Naive thymus-derived CD4-positive, alpha-beta T cell (primary cell): ENCODE measurements at regions of chr14 and their contacts with region 1.

Region 1: GRCh38 chr14:76876076-76876475 is 49.9 kb downstream of the LRRC74A start:
- DNase-seq: peak in 7 of 9 donors; percentile 23 to 50 (median 37)
- ATAC-seq: peak; percentile 73
- H3K4me3 ChIP-seq: no peak overlapping the region
- H3K4me3 Mint-ChIP-seq: no peak overlapping the region
- H3K27ac ChIP-seq: no peak overlapping the region
- H3K27ac Mint-ChIP-seq: peak overlapping the region in 1 of 9 donors; percentile 69
- H3K4me1 ChIP-seq: no peaks in the 10 kb centered on the region
- H3K4me1 Mint-ChIP-seq: peaks cover 0 to 3% (median 0%) of the 10 kb centered on the region in 7 donors
- H3K27me3 ChIP-seq: no peaks in the 10 kb centered on the region
- H3K27me3 Mint-ChIP-seq: no peaks in the 10 kb centered on the region

Region 2: DNA sequence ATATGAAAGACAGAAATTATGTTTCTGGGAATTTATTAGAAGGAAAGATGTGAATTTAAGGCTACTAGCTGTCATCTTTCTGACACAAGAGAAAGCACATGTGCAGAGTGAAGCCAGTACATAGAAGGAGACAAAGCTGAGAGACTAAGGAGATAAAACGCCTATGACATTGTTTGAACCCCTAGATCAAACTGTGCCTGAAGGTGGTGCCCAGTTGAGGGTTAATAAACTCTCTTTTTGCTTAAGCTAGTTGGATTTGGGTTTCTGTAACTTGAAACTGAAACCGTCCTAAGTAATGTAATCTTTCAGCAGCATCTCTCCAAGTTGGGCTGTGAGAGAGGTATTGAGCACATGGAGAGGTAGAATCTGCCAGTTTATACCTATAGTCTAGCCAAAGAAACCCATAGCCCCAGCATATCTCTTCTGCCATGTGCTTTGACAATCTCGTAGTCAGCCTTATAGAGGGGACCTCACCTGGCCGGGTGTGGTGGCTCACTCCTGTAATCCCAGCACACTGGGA is 34.4 kb after region 1 on chr14:
- CTCF ChIA-PET with region 1: interaction called, 34 read pairs
- POLR2A ChIA-PET with region 1: no interaction called
- intact Hi-C with region 1: loop called (anchors 1 to 2 kb)
- DNase-seq: no peak
- ATAC-seq: no peak
- H3K4me3 ChIP-seq: no peak overlapping the region
- H3K4me3 Mint-ChIP-seq: no peak overlapping the region
- H3K27ac ChIP-seq: no peak overlapping the region
- H3K27ac Mint-ChIP-seq: peak overlapping the region in 2 of 9 donors; percentile 32 to 58
- H3K4me1 ChIP-seq: peaks cover 7 to 22% of the 10 kb centered on the region in 2 donors
- H3K4me1 Mint-ChIP-seq: peaks cover 7 to 52% (median 20%) of the 10 kb centered on the region in 7 donors
- H3K27me3 ChIP-seq: no peaks in the 10 kb centered on the region
- H3K27me3 Mint-ChIP-seq: no peaks in the 10 kb centered on the region

Region 3: DNA sequence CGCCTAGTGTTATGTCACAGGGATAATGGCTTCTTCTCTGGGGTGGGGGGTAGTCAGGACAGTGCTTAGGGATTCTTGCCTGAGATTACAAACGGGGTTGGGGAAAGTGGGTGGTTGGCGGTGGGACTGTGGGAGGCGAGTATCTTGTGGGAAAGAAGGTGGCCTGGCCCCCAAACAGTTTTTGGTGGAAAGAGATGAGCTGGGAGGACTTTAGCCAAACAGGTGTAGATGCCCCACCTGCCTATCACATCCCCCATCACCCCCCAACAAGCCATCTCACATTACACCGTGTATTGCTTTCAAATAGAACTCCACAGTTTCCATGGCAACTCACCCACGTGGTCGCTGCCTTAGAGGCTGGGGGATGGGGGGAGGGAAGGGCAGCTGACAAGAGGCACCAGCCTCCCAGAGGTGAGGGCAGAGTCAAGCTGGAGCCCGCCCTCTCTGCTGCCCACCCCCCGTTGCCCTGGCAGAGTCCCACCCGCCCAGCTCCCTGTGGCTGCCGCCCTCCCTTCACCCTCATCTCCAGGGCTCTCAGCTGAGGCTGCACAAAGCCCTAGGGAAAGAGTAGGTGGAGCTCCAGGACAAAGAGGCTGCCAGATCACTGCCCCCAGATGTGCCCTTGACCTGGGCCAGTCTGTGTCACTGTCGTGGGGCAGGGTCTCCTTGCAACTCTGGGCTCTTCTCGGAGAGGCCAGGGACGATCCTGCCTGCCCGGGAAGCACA is 48.5 kb after region 1 on chr14:
- CTCF ChIA-PET with region 1: no interaction called
- POLR2A ChIA-PET with region 1: no interaction called
- intact Hi-C with region 1: no loop called
- DNase-seq: peak in 5 of 9 donors; percentile 32 to 72 (median 41)
- ATAC-seq: peak; percentile 55
- H3K4me3 ChIP-seq: no peak overlapping the region
- H3K4me3 Mint-ChIP-seq: peak overlapping the region in 1 of 10 donors; percentile 84
- H3K27ac ChIP-seq: no peak overlapping the region
- H3K27ac Mint-ChIP-seq: peak overlapping the region in 8 of 9 donors; percentile 7 to 84 (median 54)
- H3K4me1 ChIP-seq: peaks cover 36 to 63% of the 10 kb centered on the region in 2 donors
- H3K4me1 Mint-ChIP-seq: peaks cover 35 to 95% (median 87%) of the 10 kb centered on the region in 7 donors
- H3K27me3 ChIP-seq: no peaks in the 10 kb centered on the region
- H3K27me3 Mint-ChIP-seq: no peaks in the 10 kb centered on the region

Region 4: DNA sequence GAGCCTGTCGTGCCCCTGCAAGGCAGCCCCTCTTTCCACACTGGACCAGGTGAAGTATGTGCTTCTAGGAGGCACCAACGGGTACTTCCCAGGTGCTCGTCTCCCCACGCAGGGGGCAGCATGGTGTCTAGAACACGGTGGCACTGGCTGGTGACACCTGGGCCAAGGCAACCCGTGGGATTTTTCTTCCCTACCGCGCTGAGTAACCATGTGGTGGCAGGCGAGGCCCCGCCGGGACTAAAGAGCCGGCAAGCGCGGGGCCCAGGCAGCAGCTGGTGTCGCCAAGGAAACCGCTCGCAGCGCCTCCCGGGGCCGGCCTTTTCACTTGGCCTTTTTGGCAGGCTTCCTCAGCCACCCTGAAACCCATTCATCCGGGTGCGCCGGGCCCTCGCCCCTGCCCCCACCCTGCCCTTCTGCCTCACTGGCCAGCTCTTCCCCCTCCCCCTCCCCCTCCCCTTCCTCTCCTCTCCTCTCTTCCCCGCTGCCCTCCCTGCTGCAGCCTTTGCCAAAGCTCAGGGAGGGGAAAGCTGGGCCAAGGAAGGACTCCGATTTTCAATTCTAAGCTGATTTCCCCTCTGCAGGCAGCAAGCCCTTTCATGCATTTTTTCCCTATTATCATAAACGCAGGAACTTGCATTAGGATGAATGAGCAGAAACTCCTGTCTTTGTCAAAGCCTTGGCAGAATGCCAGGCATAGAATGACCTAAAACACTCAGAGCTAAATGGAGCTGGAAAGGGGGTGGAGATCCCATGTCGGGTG is 71.2 kb after region 1 on chr14:
- CTCF ChIA-PET with region 1: interaction called, 3 read pairs
- POLR2A ChIA-PET with region 1: no interaction called
- intact Hi-C with region 1: loop called (anchors 1 to 2 kb)
- DNase-seq: peak; percentile 53 to 76 (median 68)
- ATAC-seq: peak; percentile 96
- H3K4me3 ChIP-seq: no peak overlapping the region
- H3K4me3 Mint-ChIP-seq: peak overlapping the region in 9 of 10 donors; percentile 20 to 65 (median 50)
- H3K27ac ChIP-seq: peak overlapping the region; percentile 20
- H3K27ac Mint-ChIP-seq: peak overlapping the region in 7 of 9 donors; percentile 28 to 83 (median 63)
- H3K4me1 ChIP-seq: peaks cover 6 to 16% of the 10 kb centered on the region in 2 donors
- H3K4me1 Mint-ChIP-seq: peaks cover 20 to 56% (median 35%) of the 10 kb centered on the region in 7 donors
- H3K27me3 ChIP-seq: no peaks in the 10 kb centered on the region
- H3K27me3 Mint-ChIP-seq: no peaks in the 10 kb centered on the region

Region 5: DNA sequence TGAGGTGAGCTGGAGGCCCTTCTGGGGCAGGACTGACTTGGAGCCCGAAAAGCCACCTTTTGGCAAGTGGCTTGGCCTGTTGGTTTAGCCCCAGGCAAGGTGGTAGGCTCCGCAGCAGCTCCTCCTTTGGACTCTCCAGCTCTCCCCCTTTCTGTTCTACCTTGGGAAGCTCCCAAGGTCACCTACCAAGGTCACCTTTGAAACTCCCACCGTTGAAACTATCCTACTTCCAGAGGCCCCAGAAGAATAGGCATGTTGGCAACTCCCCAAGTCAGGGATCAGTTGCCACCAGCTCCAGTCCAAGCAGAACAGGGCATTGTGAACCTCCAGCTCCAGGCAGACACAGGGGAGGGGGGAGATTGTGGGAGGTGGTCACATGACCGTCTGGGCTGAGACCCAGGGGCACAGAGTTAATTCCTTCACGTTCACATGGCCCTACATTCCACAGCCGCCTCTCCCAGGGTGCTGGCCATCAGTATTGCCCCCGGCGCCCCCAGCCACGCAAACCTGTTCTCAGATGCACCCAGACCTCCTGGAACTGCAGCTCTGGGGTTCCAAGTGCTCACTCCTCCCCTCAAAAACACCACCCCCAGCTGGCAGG is 138.0 kb after region 1 on chr14:
- CTCF ChIA-PET with region 1: no interaction called
- POLR2A ChIA-PET with region 1: no interaction called
- intact Hi-C with region 1: no loop called
- DNase-seq: no peak
- ATAC-seq: no peak
- H3K4me3 ChIP-seq: no peak overlapping the region
- H3K4me3 Mint-ChIP-seq: no peak overlapping the region
- H3K27ac ChIP-seq: no peak overlapping the region
- H3K27ac Mint-ChIP-seq: no peak overlapping the region
- H3K4me1 ChIP-seq: peaks cover 0 to 17% of the 10 kb centered on the region in 2 donors
- H3K4me1 Mint-ChIP-seq: peaks cover 12 to 26% (median 20%) of the 10 kb centered on the region in 7 donors
- H3K27me3 ChIP-seq: no peaks in the 10 kb centered on the region
- H3K27me3 Mint-ChIP-seq: peaks cover 0 to 3% (median 0%) of the 10 kb centered on the region in 5 donors

Region 6: DNA sequence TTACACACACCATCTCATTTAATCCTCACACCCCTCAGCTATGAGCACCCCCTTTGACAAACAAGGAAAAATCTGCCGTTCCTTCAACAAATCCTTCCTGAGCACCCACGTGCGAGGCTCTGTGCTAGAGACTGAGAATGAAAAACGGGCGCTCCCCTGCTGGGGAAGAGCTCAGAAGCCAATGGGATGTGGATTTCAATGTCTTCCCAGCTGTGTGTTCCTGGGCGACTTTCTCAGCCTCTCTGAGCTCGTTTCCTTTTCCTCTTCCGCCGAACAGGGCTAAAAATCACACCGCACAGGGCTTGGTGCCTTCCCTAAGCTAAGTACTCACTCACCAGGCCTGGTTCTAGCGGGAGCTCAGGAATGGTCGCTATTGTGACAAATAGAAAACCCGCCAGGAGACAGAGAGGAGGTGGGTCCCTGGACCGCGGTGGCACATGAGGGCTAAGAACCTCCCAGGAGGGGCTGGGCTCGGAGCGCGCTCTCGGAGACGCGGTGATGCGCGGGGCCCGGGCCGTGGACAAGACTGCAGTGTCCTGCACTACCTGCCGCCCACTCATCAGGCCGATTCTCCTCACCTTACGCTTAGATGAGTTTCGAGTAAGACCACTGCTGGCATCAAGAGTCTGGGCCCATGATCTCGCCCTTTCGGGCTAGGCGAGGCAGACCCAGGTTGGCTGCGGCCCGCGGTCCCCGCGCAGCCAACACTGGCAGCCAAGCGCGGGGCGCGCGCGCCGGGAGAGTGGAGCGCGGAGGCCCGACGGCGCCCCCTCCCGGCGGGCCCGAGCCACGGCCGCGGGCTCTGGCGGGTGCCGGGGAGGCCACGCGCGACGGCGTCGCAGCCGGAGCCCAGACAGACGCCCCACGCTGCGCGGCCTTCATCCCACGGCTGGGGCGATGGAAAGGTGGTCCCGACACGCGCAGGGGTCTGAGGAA is 248.5 kb after region 1 on chr14:
- CTCF ChIA-PET with region 1: interaction called, 5 read pairs
- POLR2A ChIA-PET with region 1: no interaction called
- intact Hi-C with region 1: loop called in 1 of 2 experiments (anchors 1 kb)
- DNase-seq: peak; percentile 49 to 77 (median 66)
- ATAC-seq: peak; percentile 91
- H3K4me3 ChIP-seq: peak overlapping the region; percentile 84
- H3K4me3 Mint-ChIP-seq: peak overlapping the region; percentile 70 to 83 (median 78)
- H3K27ac ChIP-seq: peak overlapping the region; percentile 56
- H3K27ac Mint-ChIP-seq: peak overlapping the region in 3 of 9 donors; percentile 67 to 86 (median 72)
- H3K4me1 ChIP-seq: peaks cover 16 to 48% of the 10 kb centered on the region in 2 donors
- H3K4me1 Mint-ChIP-seq: peaks cover 6 to 41% (median 28%) of the 10 kb centered on the region in 7 donors
- H3K27me3 ChIP-seq: no peaks in the 10 kb centered on the region
- H3K27me3 Mint-ChIP-seq: peaks cover 26 to 56% (median 33%) of the 10 kb centered on the region in 5 donors

Region 7: DNA sequence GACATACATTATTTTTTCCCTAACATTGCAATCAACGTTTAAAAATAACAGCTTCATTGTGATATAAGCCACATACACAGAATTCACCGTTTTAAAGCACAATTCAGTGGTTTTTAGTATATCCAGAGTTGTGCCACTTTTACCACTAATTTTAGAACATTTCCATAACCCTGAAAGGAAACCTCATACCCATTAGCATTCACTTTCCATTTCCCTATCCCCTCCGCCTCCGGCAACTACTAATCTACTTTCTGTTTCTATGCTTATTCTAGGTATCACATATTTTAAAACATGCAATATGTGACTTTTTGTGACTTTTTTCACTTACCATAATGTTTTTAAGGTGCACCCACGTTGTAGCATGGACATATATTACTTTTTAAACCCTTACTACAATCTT is 678.1 kb after region 1 on chr14:
- CTCF ChIA-PET with region 1: no interaction called
- POLR2A ChIA-PET with region 1: no interaction called
- intact Hi-C with region 1: loop called in 1 of 2 experiments (anchors 10 kb)
- DNase-seq: no peak
- ATAC-seq: peak; percentile 40
- H3K4me3 ChIP-seq: no peak overlapping the region
- H3K4me3 Mint-ChIP-seq: peak overlapping the region in 1 of 10 donors; percentile 77
- H3K27ac ChIP-seq: no peak overlapping the region
- H3K27ac Mint-ChIP-seq: peak overlapping the region in 4 of 9 donors; percentile 2 to 89 (median 26)
- H3K4me1 ChIP-seq: no peaks in the 10 kb centered on the region
- H3K4me1 Mint-ChIP-seq: peaks cover 0 to 27% (median 6%) of the 10 kb centered on the region in 7 donors
- H3K27me3 ChIP-seq: no peaks in the 10 kb centered on the region
- H3K27me3 Mint-ChIP-seq: no peaks in the 10 kb centered on the region